ENCODE measurements at regions of chr22 and their contacts with region 1.

Region 1: DNA sequence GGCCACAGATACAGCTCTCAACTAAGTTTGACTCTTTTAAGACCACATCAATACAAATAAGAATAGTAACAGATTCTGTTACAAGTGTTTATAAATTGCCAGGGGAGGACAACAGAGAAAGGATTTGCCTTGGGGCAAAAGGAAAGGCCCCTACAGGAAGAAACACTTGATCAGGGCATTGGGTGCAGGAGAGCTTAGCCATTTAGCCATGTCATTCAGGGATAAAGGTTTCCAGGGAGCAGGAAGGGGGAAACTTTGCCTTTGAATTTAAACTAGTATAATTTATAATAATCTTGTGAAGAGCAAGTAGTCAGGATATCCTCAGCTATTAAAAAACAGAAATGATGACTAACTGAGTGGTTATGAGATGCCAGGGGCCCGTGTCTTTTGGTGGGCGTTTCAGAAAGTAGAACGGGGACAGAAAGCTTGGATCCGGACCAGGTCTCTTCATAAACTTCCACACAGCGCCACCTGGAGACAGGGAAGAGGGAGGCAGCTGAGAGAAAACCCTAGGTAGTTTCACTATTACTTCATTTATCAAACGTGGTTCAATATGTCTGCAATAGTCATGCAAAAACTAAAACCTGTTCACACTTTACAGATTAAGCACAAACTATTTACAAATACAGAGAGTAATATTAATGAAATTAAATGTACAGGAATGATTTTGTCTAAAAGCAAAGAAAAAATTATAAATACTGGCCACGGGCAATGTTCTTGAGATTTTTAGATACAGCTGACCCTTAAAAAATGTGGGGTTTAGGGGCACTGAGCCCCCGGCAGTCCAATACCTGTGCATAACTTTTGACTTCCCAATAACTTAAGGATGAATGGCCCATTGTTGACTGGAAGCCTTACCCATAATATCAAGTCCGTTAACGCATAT is 11.0 kb upstream of the SLC5A4 start:
- DNase-seq: peak; percentile 27 to 76 (median 62)
- ATAC-seq: peak; percentile 63
- H3K4me3 ChIP-seq: no peak overlapping the region
- H3K4me3 Mint-ChIP-seq: no peak overlapping the region
- H3K27ac ChIP-seq: no peak overlapping the region
- H3K27ac Mint-ChIP-seq: no peak overlapping the region
- H3K4me1 ChIP-seq: no peaks in the 10 kb centered on the region
- H3K4me1 Mint-ChIP-seq: peaks cover 7% of the 10 kb centered on the region
- H3K27me3 ChIP-seq: no peaks in the 10 kb centered on the region
- H3K27me3 Mint-ChIP-seq: peaks cover 8% of the 10 kb centered on the region
- CTCF ChIP-seq: peak; percentile 89

Region 2: GRCh38 chr22:32249231-32249630 is 16.9 kb before region 1 on chr22:
- CTCF ChIA-PET with region 1: interaction called, 20 read pairs
- POLR2A ChIA-PET with region 1: no interaction called
- intact Hi-C with region 1: no loop called
- DNase-seq: no peak
- ATAC-seq: no peak
- H3K4me3 ChIP-seq: no peak overlapping the region
- H3K4me3 Mint-ChIP-seq: no peak overlapping the region
- H3K27ac ChIP-seq: no peak overlapping the region
- H3K27ac Mint-ChIP-seq: no peak overlapping the region
- H3K4me1 ChIP-seq: no peaks in the 10 kb centered on the region
- H3K4me1 Mint-ChIP-seq: no peaks in the 10 kb centered on the region
- H3K27me3 ChIP-seq: no peaks in the 10 kb centered on the region
- H3K27me3 Mint-ChIP-seq: peaks cover 30% of the 10 kb centered on the region
- CTCF ChIP-seq: no peak

Region 3: DNA sequence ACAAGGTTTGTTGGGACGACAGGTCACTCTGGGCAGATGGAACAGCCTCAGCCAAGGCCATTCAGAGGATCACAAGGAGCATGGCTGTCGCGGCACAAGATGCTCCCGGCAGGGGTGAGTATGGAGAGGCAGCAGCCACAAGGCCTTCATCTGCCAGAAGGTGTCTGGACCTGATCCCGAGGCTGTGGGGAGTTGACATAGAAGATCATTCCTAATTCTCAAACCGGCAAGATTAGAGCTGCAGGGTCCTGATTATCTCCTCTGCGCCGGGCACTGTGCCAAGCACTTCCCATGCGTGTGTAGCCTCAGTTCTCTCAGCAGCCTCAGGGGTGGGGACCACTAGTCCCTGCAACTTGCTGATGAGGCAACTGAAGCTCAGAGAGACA is 59.3 kb after region 1 on chr22:
- CTCF ChIA-PET with region 1: no interaction called
- POLR2A ChIA-PET with region 1: no interaction called
- intact Hi-C with region 1: no loop called
- DNase-seq: peak in 1 of 9 experiments; percentile 7
- ATAC-seq: no peak
- H3K4me3 ChIP-seq: no peak overlapping the region
- H3K4me3 Mint-ChIP-seq: no peak overlapping the region
- H3K27ac ChIP-seq: no peak overlapping the region
- H3K27ac Mint-ChIP-seq: no peak overlapping the region
- H3K4me1 ChIP-seq: no peaks in the 10 kb centered on the region
- H3K4me1 Mint-ChIP-seq: no peaks in the 10 kb centered on the region
- H3K27me3 ChIP-seq: peaks cover 0 to 3% of the 10 kb centered on the region in 2 experiments
- H3K27me3 Mint-ChIP-seq: peaks cover 4% of the 10 kb centered on the region
- CTCF ChIP-seq: no peak